Aorta (tissue), 5 donors: ENCODE measurements at regions of chr6 and their contacts with region 1.

Region 1: DNA sequence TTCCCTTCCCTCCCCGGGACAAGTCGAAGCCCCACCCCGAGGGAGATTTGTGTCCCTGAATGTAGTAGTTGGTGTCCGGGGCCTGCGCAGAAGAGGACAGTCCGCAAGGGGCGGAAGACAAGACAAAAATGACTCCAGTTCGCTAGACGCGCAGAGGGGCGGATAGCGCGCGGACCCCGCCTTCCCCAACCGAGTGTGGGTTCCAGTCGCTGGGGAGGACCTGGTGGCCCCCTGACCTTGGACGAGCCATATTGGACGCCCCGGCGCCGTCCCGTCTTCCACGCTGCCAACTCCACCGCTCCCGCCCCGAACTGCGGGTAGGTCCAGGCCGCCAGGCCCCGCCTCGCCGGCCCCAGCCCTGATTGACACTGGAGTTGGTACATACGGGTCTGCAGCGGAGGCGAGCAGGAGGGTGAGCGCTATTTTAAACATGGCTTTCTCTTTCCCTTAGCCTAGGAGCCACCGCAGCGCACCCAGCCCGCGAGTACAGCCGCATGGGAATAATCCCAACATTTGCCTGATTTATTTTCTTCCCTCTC is 802 bp downstream of the HMGN3 start:
- DNase-seq: peak; percentile 94 to 96
- ATAC-seq: peak; percentile 95
- H3K4me3 ChIP-seq: peak overlapping the region; percentile 82 to 86
- H3K27ac ChIP-seq: peak overlapping the region; percentile 58 to 78
- H3K4me1 ChIP-seq: no peaks in the 10 kb centered on the region
- H3K27me3 ChIP-seq: no peaks in the 10 kb centered on the region

Region 2: GRCh38 chr6:79078075-79079025 is 155.3 kb before region 1 on chr6 and contains the start of gene PHIP:
- intact Hi-C with region 1: loop called (anchors 1 kb)
- DNase-seq: peak; percentile 97 to 98
- ATAC-seq: peak; percentile 97
- H3K4me3 ChIP-seq: peak within 1 kb of the TSS; percentile 97 to 100
- H3K27ac ChIP-seq: peak within 1 kb of the TSS; percentile 72 to 87
- H3K4me1 ChIP-seq: no peaks in the 10 kb centered on the region
- H3K27me3 ChIP-seq: no peaks in the 10 kb centered on the region
- total RNA-seq, gene PHIP: 31.5 to 38.0 TPM

Region 3: GRCh38 chr6:79188885-79189480 is 44.7 kb before region 1 on chr6:
- intact Hi-C with region 1: no loop called
- DNase-seq: no peak
- ATAC-seq: no peak
- H3K4me3 ChIP-seq: no peak overlapping the region
- H3K27ac ChIP-seq: no peak overlapping the region
- H3K4me1 ChIP-seq: peaks cover 0 to 2% of the 10 kb centered on the region in 2 donors
- H3K27me3 ChIP-seq: no peaks in the 10 kb centered on the region

Region 4: GRCh38 chr6:79335133-79335674 is 101.5 kb after region 1 on chr6:
- intact Hi-C with region 1: no loop called
- DNase-seq: no peak
- ATAC-seq: no peak
- H3K4me3 ChIP-seq: no peak overlapping the region
- H3K27ac ChIP-seq: no peak overlapping the region
- H3K4me1 ChIP-seq: no peaks in the 10 kb centered on the region
- H3K27me3 ChIP-seq: no peaks in the 10 kb centered on the region

Region 5: DNA sequence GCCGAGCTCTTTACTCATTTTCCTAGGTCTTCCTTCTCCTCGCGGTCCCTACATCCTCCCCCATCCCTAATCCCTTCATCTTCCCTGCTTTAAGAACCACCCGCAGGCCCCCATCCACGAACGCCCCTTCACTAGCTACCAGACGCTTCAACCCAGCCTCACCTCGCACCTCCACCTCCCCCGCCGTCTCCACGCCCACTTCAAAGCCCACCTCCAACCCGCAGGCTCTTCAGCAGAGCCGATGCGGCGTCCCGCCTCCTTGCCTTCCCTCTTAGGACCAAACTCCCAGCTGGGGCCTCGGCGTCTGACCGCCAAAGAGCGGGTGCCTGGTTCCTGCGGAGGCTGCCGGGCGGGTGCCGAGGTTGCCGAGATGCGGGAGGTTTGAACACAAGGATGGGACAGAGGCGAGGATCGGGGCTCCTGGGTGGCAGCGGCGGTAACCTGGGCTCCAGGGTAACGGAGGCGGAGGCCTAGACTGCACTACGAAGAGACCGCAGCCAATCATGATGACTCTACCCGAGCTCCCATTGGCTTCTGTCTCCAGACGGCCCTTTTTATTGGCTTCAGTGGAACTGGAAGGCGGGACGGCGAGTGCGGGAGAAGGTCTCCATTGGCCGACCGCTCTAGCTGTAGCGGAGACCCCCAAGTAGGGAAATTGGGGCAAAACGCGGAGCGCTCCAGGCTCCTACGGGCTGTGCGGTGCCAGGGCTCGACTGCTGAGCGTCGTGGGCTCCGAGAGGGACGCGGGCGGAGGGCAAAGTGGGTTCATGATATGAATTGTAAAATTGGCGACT is 303.5 kb after region 1 on chr6 and contains the start of gene LCA5:
- intact Hi-C with region 1: loop called (anchors 2 to 5 kb)
- DNase-seq: peak; percentile 95
- ATAC-seq: peak; percentile 99
- H3K4me3 ChIP-seq: peak within 1 kb of the TSS; percentile 80 to 89
- H3K27ac ChIP-seq: peak within 1 kb of the TSS; percentile 40 to 95
- H3K4me1 ChIP-seq: peaks cover 0 to 3% of the 10 kb centered on the region in 2 donors
- H3K27me3 ChIP-seq: no peaks in the 10 kb centered on the region
- total RNA-seq, gene LCA5: 7.6 to 8.8 TPM